AG04450 (cell line): ENCODE measurements at regions of chr5 and their contacts with region 1.

Region 1: GRCh38 chr5:16456103-16456832 is 9.3 kb downstream of the ZNF622 start:
- DNase-seq: peak; percentile 36
- H3K4me3 ChIP-seq: no peak overlapping the region
- H3K27ac ChIP-seq: no peak overlapping the region
- H3K27me3 ChIP-seq: no peaks in the 10 kb centered on the region
- CTCF ChIP-seq: peak; percentile 66

Region 2: DNA sequence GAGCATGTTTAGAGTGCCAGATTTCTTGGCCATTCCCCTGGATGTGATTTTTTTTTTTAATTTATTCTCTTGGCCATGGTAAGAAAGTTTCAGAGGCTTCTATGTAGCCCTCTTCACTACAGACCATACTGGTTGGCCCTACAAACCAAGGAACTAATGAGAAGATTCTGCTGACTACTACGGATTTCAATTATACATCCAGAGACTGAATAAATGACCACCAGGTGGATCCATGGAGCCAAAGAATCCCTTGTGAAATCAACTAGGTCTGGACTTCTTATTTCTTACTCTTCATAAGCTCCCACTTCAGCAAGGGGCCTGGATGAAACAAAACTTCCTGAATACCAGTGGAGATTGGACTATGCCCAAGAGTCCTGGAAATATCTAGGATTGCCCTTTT is 18.3 kb before region 1 on chr5:
- CTCF ChIA-PET with region 1: interaction called, 16 read pairs
- POLR2A ChIA-PET with region 1: no interaction called
- DNase-seq: no peak
- H3K4me3 ChIP-seq: no peak overlapping the region
- H3K27ac ChIP-seq: no peak overlapping the region
- H3K27me3 ChIP-seq: peaks cover 2% of the 10 kb centered on the region
- CTCF ChIP-seq: peak; percentile 35

Region 3: GRCh38 chr5:16483361-16483760 is 27.1 kb after region 1 on chr5:
- CTCF ChIA-PET with region 1: interaction called, 13 read pairs
- POLR2A ChIA-PET with region 1: no interaction called
- DNase-seq: no peak
- H3K4me3 ChIP-seq: no peak overlapping the region
- H3K27ac ChIP-seq: no peak overlapping the region
- H3K27me3 ChIP-seq: peaks cover 12% of the 10 kb centered on the region
- CTCF ChIP-seq: no peak